GM12878 (cell line): ENCODE measurements at regions of chr4 and their contacts with region 1.

Region 1: GRCh38 chr4:75995727-75996126 is 5.0 kb upstream of the SDAD1 start:
- DNase-seq: no peak
- ATAC-seq: peak; percentile 52
- H3K4me3 ChIP-seq: no peak overlapping the region
- H3K27ac ChIP-seq: no peak overlapping the region
- H3K4me1 ChIP-seq: no peaks in the 10 kb centered on the region
- H3K27me3 ChIP-seq: no peaks in the 10 kb centered on the region; a peak in 1 of 4 replicates
- CTCF ChIP-seq: peak; percentile 46 to 62 (median 53); a peak in 5 of 6 replicates
- EP300 ChIP-seq: no peak
- POLR2A ChIP-seq: no peak
- RAD21 ChIP-seq: peak; percentile 80

Region 2: GRCh38 chr4:76023389-76023788 is 27.7 kb after region 1 on chr4 and contains the start of gene CXCL10:
- CTCF ChIA-PET with region 1: interaction called, 25 read pairs
- POLR2A ChIA-PET with region 1: no interaction called
- RAD21 ChIA-PET with region 1: no interaction called
- SMC1A ChIA-PET with region 1: interaction called, 6 read pairs
- in situ Hi-C with region 1: no loop called
- intact Hi-C with region 1: no loop called
- DNase-seq: no peak
- ATAC-seq: 0 out of 3 replicates have a peak, but pooled peaks have one; percentile 28
- H3K4me3 ChIP-seq: no peak within 1 kb of the TSS
- H3K27ac ChIP-seq: no peak within 1 kb of the TSS
- H3K4me1 ChIP-seq: peaks cover 4% of the 10 kb centered on the region; the same call in 1 of the 2 replicates
- H3K27me3 ChIP-seq: no peaks in the 10 kb centered on the region; a peak in 1 of 4 replicates
- CTCF ChIP-seq: no peak
- EP300 ChIP-seq: no peak
- POLR2A ChIP-seq: no peak
- RAD21 ChIP-seq: no peak
- polyA plus RNA-seq, gene CXCL10: 7.7 to 10.4 TPM

Region 3: DNA sequence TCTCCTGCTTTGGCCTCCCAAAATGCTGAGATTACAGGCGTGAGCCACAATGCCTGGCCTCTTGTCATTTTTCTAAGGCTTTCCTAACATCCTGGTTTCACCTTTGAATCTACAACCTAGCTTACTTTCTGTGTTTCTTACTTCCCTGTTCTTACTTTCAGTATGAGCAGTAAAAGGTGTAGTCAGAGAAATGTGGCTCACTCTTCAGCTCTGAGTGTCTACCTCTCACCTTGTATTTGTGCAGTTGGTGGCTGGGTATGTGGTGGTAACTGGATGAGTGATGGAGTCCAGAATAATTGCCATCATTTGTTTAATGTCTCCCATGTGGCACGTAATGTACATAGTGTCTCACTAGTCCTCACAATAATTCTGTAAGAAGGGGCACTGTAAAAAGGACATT is 59.3 kb after region 1 on chr4:
- CTCF ChIA-PET with region 1: interaction called, 46 read pairs
- POLR2A ChIA-PET with region 1: interaction called, 8 read pairs
- RAD21 ChIA-PET with region 1: interaction called, 24 read pairs
- SMC1A ChIA-PET with region 1: interaction called, 95 read pairs
- in situ Hi-C with region 1: no loop called
- intact Hi-C with region 1: no loop called
- DNase-seq: peak; percentile 74
- ATAC-seq: peak; percentile 98
- H3K4me3 ChIP-seq: no peak overlapping the region; the same call in 1 of the 2 replicates
- H3K27ac ChIP-seq: no peak overlapping the region
- H3K4me1 ChIP-seq: peaks cover 29% of the 10 kb centered on the region
- H3K27me3 ChIP-seq: peaks cover 0 to 2% of the 10 kb centered on the region in 2 experiments; a peak in 2 of 4 replicates
- CTCF ChIP-seq: no peak
- EP300 ChIP-seq: peak; percentile 26 to 85; a peak in 2 of 4 replicates
- POLR2A ChIP-seq: no peak
- RAD21 ChIP-seq: 0 out of 2 replicates have a peak, but pooled peaks have one; percentile 10

Region 4: GRCh38 chr4:76067652-76068286 is 72.0 kb after region 1 on chr4:
- CTCF ChIA-PET with region 1: interaction called, 95 read pairs
- POLR2A ChIA-PET with region 1: interaction called, 3 read pairs
- RAD21 ChIA-PET with region 1: interaction called, 28 read pairs
- SMC1A ChIA-PET with region 1: interaction called, 95 read pairs
- in situ Hi-C with region 1: loop called (anchors 5 kb)
- intact Hi-C with region 1: loop called (anchors 1 kb)
- DNase-seq: no peak
- ATAC-seq: peak; percentile 99
- H3K4me3 ChIP-seq: no peak overlapping the region
- H3K27ac ChIP-seq: no peak overlapping the region
- H3K4me1 ChIP-seq: no peaks in the 10 kb centered on the region
- H3K27me3 ChIP-seq: peaks cover 0 to 6% of the 10 kb centered on the region in 2 experiments; a peak in 3 of 4 replicates
- CTCF ChIP-seq: peak; percentile 76 to 86 (median 79)
- EP300 ChIP-seq: no peak
- POLR2A ChIP-seq: no peak
- RAD21 ChIP-seq: peak; percentile 95

Region 5: GRCh38 chr4:76377911-76378310 is 382.2 kb after region 1 on chr4:
- CTCF ChIA-PET with region 1: interaction called, 11 read pairs
- POLR2A ChIA-PET with region 1: no interaction called
- RAD21 ChIA-PET with region 1: no interaction called
- SMC1A ChIA-PET with region 1: interaction called, 8 read pairs
- in situ Hi-C with region 1: no loop called
- intact Hi-C with region 1: no loop called
- DNase-seq: no peak
- ATAC-seq: peak; percentile 32; the same call in 1 of the 3 replicates
- H3K4me3 ChIP-seq: no peak overlapping the region
- H3K27ac ChIP-seq: no peak overlapping the region
- H3K4me1 ChIP-seq: no peaks in the 10 kb centered on the region
- H3K27me3 ChIP-seq: no peaks in the 10 kb centered on the region; a peak in 2 of 4 replicates
- CTCF ChIP-seq: peak; percentile 49 to 52 (median 52); a peak in 5 of 6 replicates
- EP300 ChIP-seq: no peak
- POLR2A ChIP-seq: no peak
- RAD21 ChIP-seq: peak; percentile 84